ENCODE measurements at regions of chr3 and their contacts with region 1.

Region 1: GRCh38 chr3:52220380-52221026 is 4.9 kb downstream of the TLR9 start:
- DNase-seq: peak; percentile 81 to 86 (median 83)
- H3K4me3 ChIP-seq: no peak overlapping the region
- H3K4me3 Mint-ChIP-seq: peak overlapping the region in 7 of 8 donors; percentile 52 to 85 (median 67)
- H3K27ac ChIP-seq: peak overlapping the region; percentile 44
- H3K27ac Mint-ChIP-seq: peak overlapping the region; percentile 61 to 93 (median 84)
- H3K4me1 ChIP-seq: peaks cover 98% of the 10 kb centered on the region
- H3K4me1 Mint-ChIP-seq: peaks cover 50 to 99% (median 80%) of the 10 kb centered on the region in 4 donors
- H3K27me3 ChIP-seq: no peaks in the 10 kb centered on the region
- H3K27me3 Mint-ChIP-seq: no peaks in the 10 kb centered on the region

Region 2: DNA sequence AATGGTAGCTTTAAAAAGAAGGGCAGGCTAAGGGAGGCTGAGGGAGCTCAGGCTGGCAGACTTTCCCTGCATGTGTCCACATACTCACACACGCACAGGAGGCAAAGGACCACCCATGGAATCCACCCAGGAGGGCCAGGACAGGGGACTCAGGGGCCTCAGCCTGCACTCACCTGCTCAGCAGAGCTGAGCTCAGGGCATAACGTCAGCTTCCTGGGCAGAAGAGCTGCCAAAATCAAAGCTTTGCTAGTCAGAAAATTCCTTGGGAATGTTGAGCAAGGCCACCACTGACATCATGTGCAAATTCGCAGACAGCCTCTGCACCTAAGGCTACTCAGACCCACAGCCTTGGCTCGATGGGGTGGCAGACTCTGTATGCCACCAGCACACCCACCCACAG is 39.0 kb before region 1 on chr3:
- CTCF ChIA-PET with region 1: no interaction called
- POLR2A ChIA-PET with region 1: no interaction called
- intact Hi-C with region 1: no loop called
- DNase-seq: no peak
- H3K4me3 ChIP-seq: no peak overlapping the region
- H3K4me3 Mint-ChIP-seq: no peak overlapping the region
- H3K27ac ChIP-seq: no peak overlapping the region
- H3K27ac Mint-ChIP-seq: peak overlapping the region in 3 of 7 donors; percentile 18 to 25 (median 22)
- H3K4me1 ChIP-seq: peaks cover 15% of the 10 kb centered on the region
- H3K4me1 Mint-ChIP-seq: peaks cover 2 to 18% (median 10%) of the 10 kb centered on the region in 4 donors
- H3K27me3 ChIP-seq: no peaks in the 10 kb centered on the region
- H3K27me3 Mint-ChIP-seq: no peaks in the 10 kb centered on the region

Region 3: GRCh38 chr3:52197842-52198668 is 22.4 kb before region 1 on chr3 and contains the start of gene ALAS1:
- CTCF ChIA-PET with region 1: interaction called, 12 read pairs
- POLR2A ChIA-PET with region 1: interaction called, 14 read pairs
- intact Hi-C with region 1: loop called (anchors 2 kb)
- DNase-seq: peak; percentile 90 to 95 (median 94)
- H3K4me3 ChIP-seq: peak within 1 kb of the TSS; percentile 82 to 90
- H3K4me3 Mint-ChIP-seq: peak within 1 kb of the TSS; percentile 93 to 99 (median 96)
- H3K27ac ChIP-seq: peak within 1 kb of the TSS; percentile 92
- H3K27ac Mint-ChIP-seq: peak within 1 kb of the TSS; percentile 91 to 99 (median 97)
- H3K4me1 ChIP-seq: peaks cover 52% of the 10 kb centered on the region
- H3K4me1 Mint-ChIP-seq: peaks cover 27 to 60% (median 47%) of the 10 kb centered on the region in 4 donors
- H3K27me3 ChIP-seq: no peaks in the 10 kb centered on the region
- H3K27me3 Mint-ChIP-seq: no peaks in the 10 kb centered on the region
- total RNA-seq, gene ALAS1: 30.0 to 34.6 TPM

Region 4: DNA sequence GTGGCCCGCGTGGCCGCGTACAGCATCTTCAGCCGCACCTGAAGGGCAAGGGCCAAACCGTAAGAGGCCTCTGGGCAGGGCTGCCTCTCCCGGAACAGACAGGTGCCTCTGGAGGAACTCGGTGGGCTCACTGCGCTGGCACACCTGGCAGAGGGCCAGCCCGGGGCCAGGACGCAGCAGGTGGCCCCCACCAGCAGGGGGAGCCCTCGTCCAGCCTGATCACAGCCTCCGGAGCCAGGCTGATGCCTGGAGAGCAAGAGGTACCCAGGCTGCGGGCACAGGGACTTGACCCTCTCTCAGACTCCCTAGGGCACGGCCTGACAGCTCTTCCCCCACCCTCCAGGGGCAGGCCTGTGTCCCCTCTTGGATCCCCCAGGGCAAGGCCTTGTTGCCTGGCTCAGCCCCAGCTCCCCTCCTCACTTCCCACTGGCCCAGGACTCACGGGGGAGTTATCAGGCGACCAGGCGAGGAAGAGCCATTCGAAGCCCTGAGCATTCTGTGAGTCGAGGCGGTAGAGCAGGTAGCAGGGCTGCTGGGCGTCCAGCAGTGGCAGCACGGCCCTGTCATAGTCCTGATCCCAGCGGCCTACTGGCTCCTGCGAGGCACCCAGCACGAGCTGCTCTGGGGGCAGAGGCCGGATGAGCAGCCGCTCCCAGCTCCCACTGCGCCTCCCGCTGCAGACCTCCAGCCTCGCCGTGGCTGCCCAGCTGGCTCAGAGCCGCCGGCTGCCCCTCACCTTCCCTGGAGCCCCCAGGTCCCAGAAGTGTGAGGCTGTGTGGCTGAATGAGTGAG is 11.2 kb after region 1 on chr3:
- CTCF ChIA-PET with region 1: interaction called, 179 read pairs
- POLR2A ChIA-PET with region 1: interaction called, 39 read pairs
- intact Hi-C with region 1: no loop called
- DNase-seq: peak; percentile 82 to 88 (median 85)
- H3K4me3 ChIP-seq: no peak overlapping the region
- H3K4me3 Mint-ChIP-seq: peak overlapping the region in 7 of 8 donors; percentile 35 to 82 (median 66)
- H3K27ac ChIP-seq: no peak overlapping the region
- H3K27ac Mint-ChIP-seq: peak overlapping the region; percentile 29 to 89 (median 81)
- H3K4me1 ChIP-seq: peaks cover 57% of the 10 kb centered on the region
- H3K4me1 Mint-ChIP-seq: peaks cover 23 to 77% (median 43%) of the 10 kb centered on the region in 4 donors
- H3K27me3 ChIP-seq: no peaks in the 10 kb centered on the region
- H3K27me3 Mint-ChIP-seq: no peaks in the 10 kb centered on the region

Region 5: GRCh38 chr3:52245322-52246263 is 25.1 kb after region 1 on chr3 and contains the start of gene PPM1M:
- CTCF ChIA-PET with region 1: interaction called, 21 read pairs
- POLR2A ChIA-PET with region 1: interaction called, 15 read pairs
- intact Hi-C with region 1: no loop called
- DNase-seq: peak; percentile 71 to 84 (median 79)
- H3K4me3 ChIP-seq: peak within 1 kb of the TSS; percentile 88 to 95
- H3K4me3 Mint-ChIP-seq: peak within 1 kb of the TSS; percentile 82 to 94 (median 90)
- H3K27ac ChIP-seq: peak within 1 kb of the TSS; percentile 90
- H3K27ac Mint-ChIP-seq: peak within 1 kb of the TSS; percentile 95 to 97 (median 96)
- H3K4me1 ChIP-seq: peaks cover 85% of the 10 kb centered on the region
- H3K4me1 Mint-ChIP-seq: peaks cover 53 to 90% (median 72%) of the 10 kb centered on the region in 4 donors
- H3K27me3 ChIP-seq: no peaks in the 10 kb centered on the region
- H3K27me3 Mint-ChIP-seq: no peaks in the 10 kb centered on the region
- total RNA-seq, gene PPM1M: 70.2 to 81.1 TPM

Region 6: GRCh38 chr3:52259035-52259434 is 38.5 kb after region 1 on chr3:
- CTCF ChIA-PET with region 1: interaction called, 16 read pairs
- POLR2A ChIA-PET with region 1: interaction called, 17 read pairs
- intact Hi-C with region 1: no loop called
- DNase-seq: no peak
- H3K4me3 ChIP-seq: no peak overlapping the region
- H3K4me3 Mint-ChIP-seq: no peak overlapping the region
- H3K27ac ChIP-seq: peak overlapping the region; percentile 45
- H3K27ac Mint-ChIP-seq: peak overlapping the region; percentile 49 to 97 (median 83)
- H3K4me1 ChIP-seq: peaks cover 97% of the 10 kb centered on the region
- H3K4me1 Mint-ChIP-seq: peaks cover 57 to 98% (median 83%) of the 10 kb centered on the region in 4 donors
- H3K27me3 ChIP-seq: no peaks in the 10 kb centered on the region
- H3K27me3 Mint-ChIP-seq: no peaks in the 10 kb centered on the region

Region 7: DNA sequence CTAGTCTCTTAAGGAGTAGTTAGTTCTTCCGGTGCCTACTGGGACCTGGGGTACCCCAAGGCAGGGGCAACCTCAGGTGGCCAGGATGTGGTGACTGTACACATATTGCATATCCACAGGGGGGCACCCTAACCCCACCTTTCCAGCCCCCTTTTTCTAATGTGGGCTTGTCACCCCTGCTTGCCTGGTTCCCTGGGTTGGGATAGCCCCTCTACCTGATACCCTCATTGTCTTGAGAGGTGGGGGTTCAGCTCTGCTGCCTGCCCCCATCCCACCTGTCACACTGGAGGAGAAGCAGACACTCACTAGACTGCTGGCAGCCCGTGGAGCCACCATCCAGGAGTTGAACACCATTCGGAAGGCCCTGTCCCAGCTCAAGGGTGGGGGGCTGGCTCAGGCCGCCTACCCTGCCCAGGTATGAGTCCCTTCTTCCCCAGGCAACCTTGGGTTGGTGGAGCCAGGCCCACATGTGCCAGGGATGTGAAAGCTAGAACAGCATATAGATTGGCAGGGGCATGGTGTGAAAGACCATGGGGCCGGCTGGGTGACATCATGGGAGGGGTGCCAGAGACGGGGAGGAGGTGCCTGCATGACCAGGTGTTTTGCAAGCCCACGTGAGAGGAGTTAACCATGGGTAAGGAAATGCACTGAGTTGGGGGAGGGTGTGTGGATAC is 71.1 kb after region 1 on chr3:
- CTCF ChIA-PET with region 1: interaction called, 17 read pairs
- POLR2A ChIA-PET with region 1: interaction called, 28 read pairs
- intact Hi-C with region 1: no loop called
- DNase-seq: no peak
- H3K4me3 ChIP-seq: no peak overlapping the region
- H3K4me3 Mint-ChIP-seq: peak overlapping the region in 4 of 8 donors; percentile 29 to 78 (median 40)
- H3K27ac ChIP-seq: no peak overlapping the region
- H3K27ac Mint-ChIP-seq: peak overlapping the region in 4 of 7 donors; percentile 35 to 83 (median 64)
- H3K4me1 ChIP-seq: peaks cover 31% of the 10 kb centered on the region
- H3K4me1 Mint-ChIP-seq: peaks cover 18 to 40% (median 27%) of the 10 kb centered on the region in 4 donors
- H3K27me3 ChIP-seq: no peaks in the 10 kb centered on the region
- H3K27me3 Mint-ChIP-seq: no peaks in the 10 kb centered on the region

Measured in CD4-positive, alpha-beta memory T cell (primary cell).